ENCODE measurements at regions of chr4 and their contacts with region 1.

Region 1: DNA sequence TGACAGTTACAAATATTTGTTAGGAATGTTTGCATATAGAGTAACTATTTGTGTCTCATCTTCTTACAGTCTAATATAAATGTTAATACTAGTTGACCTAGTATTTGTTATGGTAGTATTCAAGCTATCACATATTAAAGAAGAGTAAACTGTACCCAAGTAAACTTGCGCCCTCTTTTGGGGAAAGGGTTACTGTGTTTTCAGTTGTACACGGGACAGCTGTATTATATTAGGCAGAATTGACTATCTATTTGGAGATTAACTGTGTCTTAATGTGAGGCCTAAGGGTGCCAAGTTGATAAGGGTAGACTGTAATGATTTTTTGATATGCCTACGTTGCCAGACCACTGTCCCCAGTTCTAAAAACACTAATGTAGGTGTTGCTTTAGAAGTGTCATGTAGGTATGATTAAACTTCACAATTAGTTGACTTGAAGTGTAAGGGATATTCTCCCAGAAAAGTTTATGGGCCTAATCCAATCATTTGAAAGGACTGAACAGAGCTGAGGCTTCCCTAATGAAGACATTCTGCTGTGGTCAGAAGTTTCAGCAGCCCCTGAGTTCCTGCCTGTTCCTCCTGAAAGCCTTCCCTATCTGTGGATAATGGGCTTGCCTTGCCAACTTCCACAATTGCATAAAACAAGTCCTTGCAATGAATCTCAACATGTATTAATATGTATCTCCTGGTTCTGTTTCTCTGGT is 172.8 kb upstream of the CXCL13 start:
- DNase-seq: no peak
- H3K4me3 ChIP-seq: no peak overlapping the region
- H3K27me3 ChIP-seq: no peaks in the 10 kb centered on the region
- CTCF ChIP-seq: no peak

Region 2: DNA sequence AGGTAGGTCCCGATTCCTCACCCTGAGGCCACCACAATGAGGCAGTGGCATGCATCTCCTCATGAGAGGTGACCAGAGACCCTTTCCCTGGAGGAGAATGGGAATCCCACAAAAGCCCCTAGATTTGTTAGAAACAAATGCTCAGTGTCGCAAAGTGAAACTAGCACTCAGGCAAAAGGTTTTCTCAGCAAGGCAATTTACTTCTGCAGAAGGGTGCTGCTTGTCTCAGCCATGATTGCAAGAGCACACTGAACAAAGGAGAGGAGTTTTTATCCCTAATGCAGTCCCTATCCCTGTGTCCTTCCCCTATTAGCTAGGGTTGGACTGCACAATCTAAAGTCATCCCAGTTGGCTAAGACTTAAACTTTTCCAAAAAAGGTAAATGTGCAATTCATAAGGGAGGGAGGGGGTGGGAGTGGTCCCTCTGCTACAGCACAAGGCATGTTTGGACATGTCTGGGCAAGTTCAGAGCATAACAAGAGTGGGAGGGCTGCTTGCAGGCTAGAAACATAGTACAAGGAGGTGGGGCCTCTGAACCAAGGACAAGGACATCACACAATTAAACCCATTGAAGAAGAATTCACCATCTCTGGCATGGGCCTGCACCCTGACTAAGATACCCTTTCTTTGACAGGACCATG is 90.6 kb before region 1 on chr4:
- CTCF ChIA-PET with region 1: no interaction called
- POLR2A ChIA-PET with region 1: no interaction called
- DNase-seq: no peak
- H3K4me3 ChIP-seq: no peak overlapping the region
- H3K27me3 ChIP-seq: no peaks in the 10 kb centered on the region
- CTCF ChIP-seq: no peak

Region 3: GRCh38 chr4:77385124-77385969 is 47.5 kb before region 1 on chr4:
- CTCF ChIA-PET with region 1: interaction called, 12 read pairs
- POLR2A ChIA-PET with region 1: no interaction called
- DNase-seq: no peak
- H3K4me3 ChIP-seq: no peak overlapping the region
- H3K27me3 ChIP-seq: peaks cover 3% of the 10 kb centered on the region; the same call in 1 of the 2 replicates
- CTCF ChIP-seq: peak; percentile 85

Region 4: GRCh38 chr4:77510367-77510766 is 77.5 kb after region 1 on chr4:
- CTCF ChIA-PET with region 1: no interaction called
- POLR2A ChIA-PET with region 1: no interaction called
- DNase-seq: no peak
- H3K4me3 ChIP-seq: no peak overlapping the region
- H3K27me3 ChIP-seq: no peaks in the 10 kb centered on the region
- CTCF ChIP-seq: no peak

Region 5: DNA sequence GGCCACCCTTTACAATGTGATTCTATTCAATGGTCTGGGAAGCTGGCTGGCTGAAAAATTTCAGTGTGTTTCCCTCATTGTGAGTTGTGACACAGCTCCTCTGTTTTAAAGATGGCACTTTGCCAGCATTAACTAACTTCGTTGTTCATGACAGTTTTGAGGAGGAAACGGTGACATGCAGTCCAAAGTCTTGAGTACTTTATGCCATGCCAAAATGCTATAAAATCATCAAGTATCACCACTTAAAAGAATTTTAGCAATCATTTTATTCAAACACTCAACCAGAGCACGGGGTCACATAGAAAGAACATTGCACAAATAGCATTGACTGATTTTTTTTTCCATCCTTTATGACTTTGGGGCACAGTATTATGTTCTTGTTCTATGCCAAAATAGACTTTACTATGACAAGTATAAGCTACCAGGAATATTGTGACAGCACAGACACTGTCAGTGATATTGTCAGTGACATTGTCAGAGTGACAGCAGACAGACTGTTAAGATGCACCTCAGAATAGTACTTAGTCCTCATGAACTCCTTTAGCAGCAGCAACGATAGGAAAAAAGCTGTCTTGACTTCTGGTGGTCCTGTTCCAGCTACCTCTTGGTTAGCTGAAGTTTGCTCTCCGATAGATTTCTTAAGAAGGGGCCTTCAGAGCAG is 219.5 kb after region 1 on chr4:
- CTCF ChIA-PET with region 1: no interaction called
- POLR2A ChIA-PET with region 1: no interaction called
- DNase-seq: no peak
- H3K4me3 ChIP-seq: no peak overlapping the region
- H3K27me3 ChIP-seq: no peaks in the 10 kb centered on the region
- CTCF ChIP-seq: no peak